GM12878 (cell line): ENCODE measurements at regions of chr16 and their contacts with region 1.

Region 1: GRCh38 chr16:85528528-85529387 is 84.4 kb upstream of the GSE1 start:
- DNase-seq: no peak
- ATAC-seq: peak; percentile 84
- H3K4me3 ChIP-seq: no peak overlapping the region
- H3K27ac ChIP-seq: no peak overlapping the region
- H3K4me1 ChIP-seq: no peaks in the 10 kb centered on the region
- H3K27me3 ChIP-seq: no peaks in the 10 kb centered on the region; a peak in 1 of 4 replicates
- CTCF ChIP-seq: peak; percentile 46 to 77 (median 60)
- EP300 ChIP-seq: no peak
- POLR2A ChIP-seq: no peak
- RAD21 ChIP-seq: peak; percentile 43

Region 2: GRCh38 chr16:85491058-85491771 is 37.5 kb before region 1 on chr16:
- CTCF ChIA-PET with region 1: interaction called, 16 read pairs
- POLR2A ChIA-PET with region 1: no interaction called
- RAD21 ChIA-PET with region 1: no interaction called
- SMC1A ChIA-PET with region 1: no interaction called
- in situ Hi-C with region 1: no loop called
- intact Hi-C with region 1: no loop called
- DNase-seq: no peak
- ATAC-seq: peak; percentile 86
- H3K4me3 ChIP-seq: no peak overlapping the region
- H3K27ac ChIP-seq: no peak overlapping the region
- H3K4me1 ChIP-seq: peaks cover 3% of the 10 kb centered on the region; the same call in 1 of the 2 replicates
- H3K27me3 ChIP-seq: peaks cover 0 to 2% of the 10 kb centered on the region in 2 experiments; a peak in 1 of 4 replicates
- CTCF ChIP-seq: peak; percentile 72 to 98 (median 98)
- EP300 ChIP-seq: no peak
- POLR2A ChIP-seq: no peak
- RAD21 ChIP-seq: peak; percentile 67

Region 3: DNA sequence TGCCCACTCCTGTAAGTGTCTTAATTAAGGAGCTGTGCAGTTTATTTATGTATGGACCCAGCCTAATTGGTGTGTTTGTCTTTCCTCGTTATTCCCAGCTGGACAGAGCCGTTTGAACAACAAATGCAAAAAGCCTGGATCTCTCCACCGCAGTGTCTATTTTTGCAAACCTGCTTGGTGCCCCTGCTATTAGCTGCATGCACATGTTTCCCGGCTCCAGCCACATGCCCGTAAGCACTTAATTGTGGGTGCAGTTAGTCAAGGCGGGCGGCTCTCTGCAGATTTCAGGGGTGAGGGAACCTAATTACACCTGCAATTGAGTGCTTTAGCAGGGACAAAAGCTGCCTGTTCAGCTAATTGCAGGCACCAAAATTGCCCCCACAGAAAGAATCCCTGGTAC is 10.3 kb after region 1 on chr16:
- CTCF ChIA-PET with region 1: interaction called, 10 read pairs
- POLR2A ChIA-PET with region 1: no interaction called
- RAD21 ChIA-PET with region 1: interaction called, 3 read pairs
- SMC1A ChIA-PET with region 1: interaction called, 5 read pairs
- in situ Hi-C with region 1: no loop called
- intact Hi-C with region 1: no loop called
- DNase-seq: no peak
- ATAC-seq: no peak
- H3K4me3 ChIP-seq: no peak overlapping the region
- H3K27ac ChIP-seq: no peak overlapping the region
- H3K4me1 ChIP-seq: no peaks in the 10 kb centered on the region
- H3K27me3 ChIP-seq: no peaks in the 10 kb centered on the region; a peak in 1 of 4 replicates
- CTCF ChIP-seq: no peak
- EP300 ChIP-seq: no peak
- POLR2A ChIP-seq: no peak
- RAD21 ChIP-seq: no peak